Sigmoid colon (tissue), 7 donors: ENCODE measurements at regions of chr1 and their contacts with region 1.

Region 1: DNA sequence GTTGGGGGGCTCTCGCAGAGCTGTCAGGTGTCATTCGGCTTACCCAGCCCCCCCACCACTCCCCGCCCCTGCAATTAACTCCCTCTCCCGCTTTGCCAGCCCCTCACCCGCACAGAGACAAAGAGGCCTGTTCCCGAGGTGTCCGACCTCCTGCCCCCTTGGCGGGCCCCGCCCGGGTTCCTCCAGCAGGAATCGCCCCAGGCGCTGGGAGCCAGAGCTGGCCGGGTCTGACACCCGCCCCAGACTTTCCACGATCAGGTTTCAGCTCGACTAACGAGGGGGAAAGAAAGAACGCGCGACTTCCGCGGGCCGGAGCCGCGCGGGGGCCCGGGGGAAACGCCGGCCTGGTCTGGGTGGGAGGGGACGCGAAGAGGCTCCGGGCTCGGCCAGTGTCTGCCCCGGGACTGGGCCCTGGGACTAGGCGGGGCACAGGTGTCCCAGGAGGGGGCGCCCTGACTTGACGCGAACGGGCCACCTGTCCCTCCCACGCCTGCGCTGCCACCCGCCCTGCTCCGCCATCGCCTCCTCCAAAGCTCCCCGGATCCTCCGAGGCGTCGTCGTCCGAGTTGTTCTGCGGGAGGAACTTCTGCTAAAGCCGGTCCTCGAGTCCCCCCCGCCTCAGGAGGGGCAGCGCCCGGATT is 36.4 kb upstream of the HHAT start:
- DNase-seq: peak; percentile 78
- H3K4me3 ChIP-seq: peak overlapping the region; percentile 29 to 54 (median 42)
- H3K27ac ChIP-seq: peak overlapping the region; percentile 78 to 91 (median 84)
- H3K4me1 ChIP-seq: peaks cover 0 to 55% (median 47%) of the 10 kb centered on the region in 4 donors
- H3K27me3 ChIP-seq: no peaks in the 10 kb centered on the region
- CTCF ChIP-seq: peak in 1 of 4 experiments; percentile 22
- EP300 ChIP-seq: no peak
- POLR2A ChIP-seq: no peak

Region 2: DNA sequence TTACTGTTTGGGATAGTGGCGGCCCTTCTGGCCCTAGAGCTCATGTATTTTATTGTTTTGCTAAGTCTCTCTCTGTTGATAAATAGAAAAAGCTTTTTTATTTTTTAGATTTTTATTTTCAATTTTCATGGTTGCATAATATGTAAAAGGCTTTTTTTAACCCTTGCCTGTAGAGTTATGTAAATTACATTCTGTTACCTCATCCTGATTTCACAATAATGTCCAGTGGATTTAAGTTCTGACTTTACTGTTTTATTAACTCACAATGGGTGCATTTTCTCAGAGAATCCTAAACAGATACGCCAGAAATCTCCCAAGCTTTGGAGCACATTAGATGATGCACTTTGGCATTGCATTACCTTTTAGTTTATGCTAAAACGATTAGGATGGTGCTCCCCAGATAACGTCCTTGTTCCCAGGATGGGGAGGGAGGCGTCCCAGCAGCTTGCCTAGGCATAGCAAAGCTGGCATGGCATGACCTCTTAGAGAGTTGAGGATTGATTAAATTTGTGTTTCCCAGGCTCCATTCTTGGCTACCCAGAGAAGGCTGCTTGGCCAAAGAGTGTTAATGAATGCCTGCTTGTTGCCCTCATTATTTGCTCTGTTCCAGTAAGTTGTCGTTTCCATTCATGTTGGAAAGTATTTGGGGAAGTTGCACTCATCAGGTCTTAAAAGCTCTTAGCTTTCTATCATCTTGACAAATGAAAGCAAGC is 447.5 kb before region 1 on chr1:
- intact Hi-C with region 1: no loop called
- DNase-seq: no peak
- H3K4me3 ChIP-seq: no peak overlapping the region
- H3K27ac ChIP-seq: no peak overlapping the region
- H3K4me1 ChIP-seq: peaks cover 0 to 12% (median 7%) of the 10 kb centered on the region in 4 donors
- H3K27me3 ChIP-seq: no peaks in the 10 kb centered on the region
- CTCF ChIP-seq: no peak
- EP300 ChIP-seq: no peak
- POLR2A ChIP-seq: no peak

Region 3: GRCh38 chr1:210233216-210234020 is 58.9 kb before region 1 on chr1:
- intact Hi-C with region 1: loop called (anchors 2 kb)
- DNase-seq: peak; percentile 76
- H3K4me3 ChIP-seq: peak overlapping the region; percentile 58 to 97 (median 83)
- H3K27ac ChIP-seq: peak overlapping the region; percentile 84 to 99 (median 98)
- H3K4me1 ChIP-seq: peaks cover 0 to 61% (median 56%) of the 10 kb centered on the region in 4 donors
- H3K27me3 ChIP-seq: no peaks in the 10 kb centered on the region
- CTCF ChIP-seq: no peak
- EP300 ChIP-seq: no peak
- POLR2A ChIP-seq: peak in 1 of 2 donors; percentile 8

Region 4: GRCh38 chr1:210262167-210262896 is 30.0 kb before region 1 on chr1:
- intact Hi-C with region 1: loop called (anchors 2 kb)
- DNase-seq: peak; percentile 69
- H3K4me3 ChIP-seq: no peak overlapping the region
- H3K27ac ChIP-seq: peak overlapping the region; percentile 69 to 80 (median 72)
- H3K4me1 ChIP-seq: peaks cover 0 to 69% (median 55%) of the 10 kb centered on the region in 4 donors
- H3K27me3 ChIP-seq: no peaks in the 10 kb centered on the region
- CTCF ChIP-seq: no peak
- EP300 ChIP-seq: no peak
- POLR2A ChIP-seq: no peak

Region 5: GRCh38 chr1:210272666-210273065 is 19.7 kb before region 1 on chr1:
- intact Hi-C with region 1: no loop called
- DNase-seq: no peak
- H3K4me3 ChIP-seq: no peak overlapping the region
- H3K27ac ChIP-seq: no peak overlapping the region
- H3K4me1 ChIP-seq: peaks cover 0 to 7% (median 2%) of the 10 kb centered on the region in 4 donors
- H3K27me3 ChIP-seq: no peaks in the 10 kb centered on the region
- CTCF ChIP-seq: no peak
- EP300 ChIP-seq: no peak
- POLR2A ChIP-seq: no peak

Region 6: DNA sequence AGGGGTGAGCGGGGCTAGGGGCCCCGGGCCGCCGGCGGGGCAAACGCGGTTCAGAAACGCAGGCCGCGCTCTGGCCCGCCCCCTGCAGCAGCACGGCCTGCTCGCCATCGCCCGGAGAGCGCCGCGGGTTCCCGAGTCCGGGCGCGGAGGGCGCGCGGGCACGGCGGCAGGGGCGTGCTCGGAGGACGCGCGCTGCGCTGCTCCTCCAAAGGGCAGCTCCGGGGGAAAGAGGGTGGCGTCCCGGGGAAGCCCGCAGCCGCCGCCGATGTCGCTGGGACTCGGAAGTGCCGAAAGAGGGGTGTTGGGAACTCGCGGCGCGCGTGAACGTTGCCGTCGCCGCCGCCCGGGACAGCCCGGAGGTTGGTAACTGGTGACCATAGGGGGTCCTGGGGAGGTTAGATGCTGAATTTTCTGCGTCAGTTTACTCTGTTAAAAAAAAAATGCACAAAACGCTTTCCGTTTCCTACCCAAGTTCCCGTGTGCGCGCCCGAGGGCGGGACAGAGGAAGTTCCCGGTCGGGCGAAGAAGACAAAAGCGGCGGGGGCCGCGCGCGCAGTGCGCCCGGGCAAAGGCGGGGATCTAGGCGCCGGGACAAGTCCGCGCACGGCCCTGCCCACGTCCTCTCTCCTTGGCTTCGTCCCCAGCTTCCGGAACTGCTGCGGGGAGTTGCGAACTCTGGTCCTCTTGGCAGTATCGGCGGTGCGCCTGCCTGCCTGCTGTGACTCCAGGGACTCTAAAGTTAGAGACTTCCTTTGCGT is 36.6 kb after region 1 on chr1 and contains the start of gene HHAT:
- intact Hi-C with region 1: no loop called
- DNase-seq: peak; percentile 87
- H3K4me3 ChIP-seq: peak within 1 kb of the TSS; percentile 67 to 91 (median 84)
- H3K27ac ChIP-seq: peak within 1 kb of the TSS; percentile 89 to 95 (median 94)
- H3K4me1 ChIP-seq: peaks cover 0 to 21% (median 18%) of the 10 kb centered on the region in 4 donors
- H3K27me3 ChIP-seq: no peaks in the 10 kb centered on the region
- CTCF ChIP-seq: peak in 1 of 4 experiments; percentile 28
- EP300 ChIP-seq: no peak
- POLR2A ChIP-seq: no peak
- total RNA-seq, gene HHAT: 2.0 to 6.4 (median 3.6) TPM

Region 7: DNA sequence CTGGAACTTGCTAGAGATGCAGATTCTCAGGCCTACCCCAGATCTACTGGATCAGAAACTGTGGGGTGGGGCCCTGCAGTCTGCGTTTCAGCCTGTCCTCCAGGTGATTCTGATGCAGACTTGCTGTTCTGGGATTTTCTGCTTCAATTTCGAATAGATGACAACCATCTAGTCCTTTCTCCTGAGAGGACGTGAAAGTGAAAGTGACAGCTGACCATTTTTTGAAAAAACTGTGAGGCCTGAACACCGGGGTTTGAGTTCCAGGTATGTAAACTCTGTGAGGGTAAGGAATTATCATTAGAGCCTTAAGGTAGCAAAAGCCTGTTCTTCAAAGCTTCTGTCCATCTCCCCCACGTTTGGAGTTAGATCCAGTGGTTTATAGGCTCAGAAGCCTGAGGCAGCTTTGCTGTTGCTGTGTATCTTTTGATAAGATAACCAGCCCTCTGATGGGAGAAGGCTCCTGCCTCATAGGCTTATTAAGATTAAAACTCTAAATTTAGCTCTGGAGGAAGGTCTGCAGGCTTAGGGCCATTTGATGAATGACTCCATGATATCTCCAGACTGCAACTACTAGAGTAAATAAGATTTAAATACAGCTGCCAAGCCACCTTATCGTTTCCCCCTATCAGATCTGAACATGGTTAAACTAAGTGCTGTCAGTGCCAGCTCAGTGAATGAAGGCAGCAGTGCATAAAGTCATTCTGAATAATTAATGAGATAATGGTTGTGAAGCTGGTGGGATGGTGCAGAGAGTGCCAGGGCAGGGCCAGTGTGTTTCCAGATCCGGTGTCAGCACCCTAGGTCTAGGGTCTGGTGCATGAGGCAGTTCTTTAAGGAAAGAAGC is 371.6 kb after region 1 on chr1:
- intact Hi-C with region 1: no loop called
- DNase-seq: no peak
- H3K4me3 ChIP-seq: no peak overlapping the region
- H3K27ac ChIP-seq: no peak overlapping the region
- H3K4me1 ChIP-seq: no peaks in the 10 kb centered on the region
- H3K27me3 ChIP-seq: no peaks in the 10 kb centered on the region
- CTCF ChIP-seq: no peak
- EP300 ChIP-seq: no peak
- POLR2A ChIP-seq: no peak